ENCODE measurements at regions of chr1 and their contacts with region 1.

Region 1: GRCh38 chr1:227318003-227318852 is at the start of gene CDC42BPA:
- DNase-seq: peak; percentile 77 to 93 (median 86)

Region 2: GRCh38 chr1:226940029-226940805 is 378.0 kb before region 1 on chr1 and contains the start of gene COQ8A:
- intact Hi-C with region 1: loop called (anchors 10 kb)
- DNase-seq: peak; percentile 98 to 100 (median 100)

Region 3: GRCh38 chr1:227429447-227430359 is 111.5 kb after region 1 on chr1:
- intact Hi-C with region 1: loop called (anchors 5 kb)
- DNase-seq: peak in 1 of 42 donors; percentile 43

Region 4: DNA sequence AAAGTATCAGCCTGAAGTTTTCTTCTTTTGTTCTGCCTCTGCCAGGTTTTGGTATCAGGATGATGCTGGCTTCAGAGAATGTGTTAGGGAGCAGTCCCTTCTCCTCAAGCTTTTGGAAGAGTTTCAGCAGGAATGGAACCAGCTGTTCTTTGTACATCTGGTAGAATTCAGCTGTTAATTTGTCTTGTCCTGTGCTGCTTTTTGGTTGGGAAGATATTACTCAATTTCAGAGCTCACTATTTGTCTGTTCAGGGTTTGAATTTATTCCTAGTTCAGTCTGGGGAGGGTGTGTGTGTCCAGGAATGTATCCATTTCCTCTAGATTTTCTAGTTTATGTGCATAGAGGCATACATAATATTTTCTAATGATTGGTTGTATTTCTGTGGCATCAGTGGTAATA is 258.0 kb after region 1 on chr1:
- intact Hi-C with region 1: no loop called
- DNase-seq: no peak

Measured in head of caudate nucleus (tissue), 42 donors.